IMR-90 (cell line): ENCODE measurements at regions of chr19 and their contacts with region 1.

Region 1: GRCh38 chr19:46197314-46198070 is 32.0 kb upstream of the IGFL1 start:
- DNase-seq: no peak
- ATAC-seq: no peak
- H3K4me3 ChIP-seq: no peak overlapping the region
- H3K27ac ChIP-seq: no peak overlapping the region
- H3K4me1 ChIP-seq: no peaks in the 10 kb centered on the region; the same call in 1 of the 2 replicates
- H3K27me3 ChIP-seq: peaks cover 60% of the 10 kb centered on the region
- CTCF ChIP-seq: no peak
- POLR2A ChIP-seq: no peak
- RAD21 ChIP-seq: no peak

Region 2: GRCh38 chr19:45305421-45305820 is 892.1 kb before region 1 on chr19:
- CTCF ChIA-PET with region 1: no interaction called
- POLR2A ChIA-PET with region 1: interaction called, 10 read pairs
- dilution Hi-C with region 1: no loop called
- in situ Hi-C with region 1: no loop called
- intact Hi-C with region 1: no loop called
- DNase-seq: no peak
- ATAC-seq: no peak
- H3K4me3 ChIP-seq: no peak overlapping the region
- H3K27ac ChIP-seq: no peak overlapping the region
- H3K4me1 ChIP-seq: no peaks in the 10 kb centered on the region
- H3K27me3 ChIP-seq: no peaks in the 10 kb centered on the region
- CTCF ChIP-seq: no peak
- POLR2A ChIP-seq: no peak
- RAD21 ChIP-seq: no peak

Region 3: DNA sequence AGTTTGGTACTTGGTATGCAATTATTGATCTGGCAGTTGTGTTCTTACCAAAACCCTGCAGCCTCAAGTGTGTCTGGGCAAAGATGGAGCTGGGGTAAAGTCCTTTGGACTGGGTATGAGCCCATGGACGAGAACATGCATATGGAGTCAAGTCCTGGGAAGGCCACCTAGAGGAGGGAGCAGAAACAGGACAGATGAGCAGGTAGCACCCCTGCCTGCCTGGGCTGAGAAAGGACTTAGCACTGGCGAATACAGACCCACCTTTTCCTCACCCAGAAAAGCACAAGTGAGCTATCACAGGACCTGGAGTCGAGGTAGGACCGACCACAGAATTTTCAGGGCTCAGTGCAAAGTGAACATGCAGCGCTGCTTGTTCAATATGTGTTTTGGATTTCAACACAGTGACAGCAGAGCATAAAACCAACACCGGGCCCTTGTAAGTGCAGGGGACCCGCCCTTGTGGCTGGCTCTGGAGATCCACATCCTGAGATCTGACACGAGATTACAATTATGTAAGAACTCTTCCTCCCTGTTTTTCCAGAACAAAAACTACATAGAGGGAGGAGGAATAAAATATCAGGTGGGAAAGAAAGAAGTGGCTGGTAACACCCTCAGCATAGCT is 23.5 kb before region 1 on chr19:
- CTCF ChIA-PET with region 1: no interaction called
- POLR2A ChIA-PET with region 1: no interaction called
- dilution Hi-C with region 1: no loop called
- in situ Hi-C with region 1: no loop called
- intact Hi-C with region 1: no loop called
- DNase-seq: no peak
- ATAC-seq: no peak
- H3K4me3 ChIP-seq: no peak overlapping the region
- H3K27ac ChIP-seq: no peak overlapping the region
- H3K4me1 ChIP-seq: no peaks in the 10 kb centered on the region
- H3K27me3 ChIP-seq: peaks cover 43% of the 10 kb centered on the region
- CTCF ChIP-seq: no peak
- POLR2A ChIP-seq: no peak
- RAD21 ChIP-seq: no peak